IMR-90 (cell line): ENCODE measurements at regions of chr18 and their contacts with region 1.

Region 1: GRCh38 chr18:48951448-48952286 is 902 bp upstream of the SMAD7 start:
- DNase-seq: peak; percentile 86
- ATAC-seq: peak; percentile 41
- H3K4me3 ChIP-seq: peak overlapping the region; percentile 99
- H3K27ac ChIP-seq: peak overlapping the region; percentile 96
- H3K4me1 ChIP-seq: peaks cover 14% of the 10 kb centered on the region
- H3K27me3 ChIP-seq: no peaks in the 10 kb centered on the region
- CTCF ChIP-seq: peak; percentile 31
- POLR2A ChIP-seq: peak; percentile 80
- RAD21 ChIP-seq: peak; percentile 43

Region 2: GRCh38 chr18:48711651-48712486 is 239.8 kb before region 1 on chr18:
- CTCF ChIA-PET with region 1: no interaction called
- POLR2A ChIA-PET with region 1: no interaction called
- dilution Hi-C with region 1: no loop called
- in situ Hi-C with region 1: no loop called
- intact Hi-C with region 1: loop called (anchors 1 kb)
- DNase-seq: peak; percentile 49
- ATAC-seq: peak; percentile 55; the same call in 1 of the 2 replicates
- H3K4me3 ChIP-seq: no peak overlapping the region
- H3K27ac ChIP-seq: no peak overlapping the region
- H3K4me1 ChIP-seq: peaks cover 4% of the 10 kb centered on the region; the same call in 1 of the 2 replicates
- H3K27me3 ChIP-seq: no peaks in the 10 kb centered on the region
- CTCF ChIP-seq: peak; percentile 50
- POLR2A ChIP-seq: no peak
- RAD21 ChIP-seq: peak; percentile 71

Region 3: DNA sequence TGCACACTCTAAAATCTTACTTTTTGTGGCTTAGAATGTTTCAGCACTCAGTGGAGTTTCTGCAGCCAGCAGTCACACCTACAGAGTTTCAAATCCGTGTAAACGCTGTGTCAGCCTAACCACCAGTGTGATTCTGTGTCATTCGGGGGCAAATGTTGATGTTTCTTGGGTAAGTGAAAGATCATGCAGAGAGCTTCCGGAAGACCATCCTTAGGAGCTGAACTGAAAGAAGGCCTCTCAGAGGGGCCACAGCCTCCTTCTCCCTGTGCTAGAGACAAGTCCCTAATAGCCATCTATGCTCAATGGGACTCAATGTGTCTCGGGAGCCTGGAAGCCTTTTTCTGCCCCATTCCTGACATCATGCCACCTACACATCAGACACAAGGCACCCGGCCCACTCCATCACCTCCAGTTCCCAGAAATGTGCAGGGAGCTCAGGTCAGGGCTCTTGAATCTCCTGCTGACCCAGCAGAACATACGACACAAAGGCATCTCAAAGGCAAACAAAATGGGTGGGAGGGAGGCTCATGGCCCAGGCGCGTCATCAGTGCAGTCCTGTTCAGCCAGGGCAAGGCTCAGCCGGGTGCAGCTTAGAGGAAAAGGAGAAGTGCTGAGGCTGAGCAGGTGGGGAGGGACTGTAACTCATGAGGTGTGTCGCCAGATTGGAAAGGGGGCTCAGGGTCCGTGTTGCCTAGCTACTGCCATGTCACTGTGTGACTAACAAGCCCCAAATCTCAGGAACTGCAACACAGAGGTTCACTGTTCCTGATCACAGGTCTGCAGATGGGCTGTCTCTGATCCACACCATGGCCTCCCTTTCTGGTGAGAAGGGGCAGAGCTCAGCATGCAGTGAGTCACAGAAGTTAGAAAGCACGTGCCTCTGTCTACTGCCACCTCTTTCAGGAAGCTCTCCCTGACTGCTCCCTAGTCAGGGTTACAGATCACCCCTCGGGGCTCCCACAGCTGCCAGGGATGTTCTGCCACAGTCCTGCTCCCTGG is 82.9 kb before region 1 on chr18:
- CTCF ChIA-PET with region 1: no interaction called
- POLR2A ChIA-PET with region 1: no interaction called
- dilution Hi-C with region 1: no loop called
- in situ Hi-C with region 1: no loop called
- intact Hi-C with region 1: loop called (anchors 5 kb)
- DNase-seq: peak; percentile 34
- ATAC-seq: no peak
- H3K4me3 ChIP-seq: no peak overlapping the region
- H3K27ac ChIP-seq: no peak overlapping the region
- H3K4me1 ChIP-seq: peaks cover 18% of the 10 kb centered on the region
- H3K27me3 ChIP-seq: no peaks in the 10 kb centered on the region
- CTCF ChIP-seq: no peak
- POLR2A ChIP-seq: no peak
- RAD21 ChIP-seq: no peak

Region 4: GRCh38 chr18:49052891-49053644 is 101.4 kb after region 1 on chr18:
- CTCF ChIA-PET with region 1: interaction called, 3 read pairs
- POLR2A ChIA-PET with region 1: no interaction called
- dilution Hi-C with region 1: no loop called
- in situ Hi-C with region 1: no loop called
- intact Hi-C with region 1: loop called (anchors 2 kb)
- DNase-seq: peak; percentile 97
- ATAC-seq: peak; percentile 71
- H3K4me3 ChIP-seq: no peak overlapping the region
- H3K27ac ChIP-seq: peak overlapping the region; percentile 85
- H3K4me1 ChIP-seq: peaks cover 38% of the 10 kb centered on the region
- H3K27me3 ChIP-seq: no peaks in the 10 kb centered on the region
- CTCF ChIP-seq: no peak
- POLR2A ChIP-seq: peak; percentile 26; the same call in 1 of the 2 replicates
- RAD21 ChIP-seq: no peak

Region 5: DNA sequence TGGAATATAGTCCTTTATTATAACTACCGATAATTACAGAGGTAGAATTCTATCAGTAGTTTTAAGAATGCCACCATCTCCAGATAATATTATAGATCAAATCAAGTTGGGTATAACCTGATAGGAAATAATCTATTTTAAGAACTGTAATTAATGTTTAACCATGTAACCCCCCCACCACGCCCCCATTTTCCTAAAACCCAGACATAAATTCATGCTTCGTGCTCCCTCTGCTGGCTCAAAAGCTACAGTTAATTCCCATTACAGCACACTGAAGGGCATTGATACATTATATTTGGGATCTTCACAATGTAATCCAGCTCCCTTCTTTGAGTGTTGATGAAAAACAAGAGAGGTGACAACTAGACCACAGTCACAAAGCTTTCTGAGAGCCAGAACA is 227.1 kb after region 1 on chr18:
- CTCF ChIA-PET with region 1: interaction called, 5 read pairs
- POLR2A ChIA-PET with region 1: no interaction called
- dilution Hi-C with region 1: no loop called
- in situ Hi-C with region 1: loop called (anchors 10 kb)
- intact Hi-C with region 1: loop called (anchors 1 kb)
- DNase-seq: peak; percentile 23
- ATAC-seq: no peak
- H3K4me3 ChIP-seq: no peak overlapping the region
- H3K27ac ChIP-seq: no peak overlapping the region
- H3K4me1 ChIP-seq: peaks cover 5% of the 10 kb centered on the region; the same call in 1 of the 2 replicates
- H3K27me3 ChIP-seq: no peaks in the 10 kb centered on the region
- CTCF ChIP-seq: peak; percentile 56
- POLR2A ChIP-seq: no peak
- RAD21 ChIP-seq: peak; percentile 68

Region 6: GRCh38 chr18:49206717-49207116 is 255.1 kb after region 1 on chr18:
- CTCF ChIA-PET with region 1: no interaction called
- POLR2A ChIA-PET with region 1: no interaction called
- dilution Hi-C with region 1: no loop called
- in situ Hi-C with region 1: no loop called
- intact Hi-C with region 1: no loop called
- DNase-seq: peak; percentile 17
- ATAC-seq: peak; percentile 84
- H3K4me3 ChIP-seq: no peak overlapping the region
- H3K27ac ChIP-seq: no peak overlapping the region
- H3K4me1 ChIP-seq: 0 out of 2 replicates have a peak, but pooled peaks cover 2% of the 10 kb centered on the region
- H3K27me3 ChIP-seq: no peaks in the 10 kb centered on the region
- CTCF ChIP-seq: peak; percentile 43
- POLR2A ChIP-seq: no peak
- RAD21 ChIP-seq: peak; percentile 36

Region 7: DNA sequence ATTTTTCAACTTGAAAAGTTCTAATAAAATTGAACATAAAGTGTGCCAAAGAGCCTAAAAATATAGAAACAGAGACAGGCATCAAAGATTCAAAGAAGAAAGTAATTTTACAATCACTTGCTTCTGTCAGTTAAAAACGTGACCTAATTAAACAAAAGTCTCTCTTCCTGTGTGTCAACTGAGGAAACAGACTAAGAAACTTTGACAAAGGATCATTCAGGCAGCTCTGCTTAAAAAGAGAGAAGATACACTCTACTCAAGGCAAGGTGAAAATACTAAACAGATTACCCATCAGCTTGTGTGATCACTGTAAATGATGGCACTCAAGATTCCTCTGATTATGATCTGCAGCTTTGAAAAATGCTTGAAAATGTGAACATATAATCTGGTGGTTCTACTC is 461.0 kb after region 1 on chr18:
- CTCF ChIA-PET with region 1: no interaction called
- POLR2A ChIA-PET with region 1: no interaction called
- dilution Hi-C with region 1: no loop called
- in situ Hi-C with region 1: no loop called
- intact Hi-C with region 1: loop called (anchors 5 kb)
- DNase-seq: no peak
- ATAC-seq: no peak
- H3K4me3 ChIP-seq: no peak overlapping the region
- H3K27ac ChIP-seq: no peak overlapping the region
- H3K4me1 ChIP-seq: peaks cover 3% of the 10 kb centered on the region; the same call in 1 of the 2 replicates
- H3K27me3 ChIP-seq: no peaks in the 10 kb centered on the region
- CTCF ChIP-seq: no peak
- POLR2A ChIP-seq: no peak
- RAD21 ChIP-seq: no peak